Spleen (tissue), 13 donors: ENCODE measurements at regions of chr10 and their contacts with region 1.

Region 1: DNA sequence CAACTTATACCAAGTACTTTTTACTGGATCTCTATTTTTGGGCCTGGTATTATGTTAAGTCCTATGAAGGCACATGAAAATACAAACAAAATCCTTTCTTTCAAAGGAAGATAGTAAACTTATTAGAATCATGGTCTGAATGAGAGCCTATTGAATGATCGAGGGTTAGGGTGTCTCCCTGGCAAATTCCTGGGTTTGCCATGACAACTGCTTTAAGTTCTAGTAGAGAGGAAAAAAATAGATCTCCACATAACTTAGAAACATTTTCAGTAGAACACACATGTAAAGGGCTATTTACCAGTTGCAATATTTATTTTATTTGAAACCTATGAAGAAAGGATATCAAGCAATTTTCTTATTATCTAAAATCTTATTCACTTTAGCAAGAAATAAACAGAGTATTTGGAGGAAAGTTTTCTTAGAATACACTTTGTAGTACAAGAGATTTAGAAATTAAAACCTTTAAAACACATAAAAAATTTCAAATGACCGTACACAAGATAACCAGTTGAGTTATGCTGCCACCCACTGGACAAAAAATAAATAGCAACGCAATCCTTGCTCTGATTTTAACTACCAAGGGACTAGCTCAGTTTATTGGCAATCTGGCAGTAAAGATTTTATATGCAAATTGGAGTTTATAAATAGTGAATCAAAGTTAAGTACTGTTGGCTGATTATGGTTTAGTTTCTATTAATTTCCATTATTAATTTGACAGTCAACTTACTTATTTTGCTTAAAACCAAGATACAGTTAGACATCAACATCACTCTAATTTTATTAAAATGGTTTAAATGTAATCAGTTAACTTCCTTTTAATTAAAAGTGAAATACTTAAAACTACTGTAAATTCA is 33.9 kb downstream of the CACUL1 start:
- DNase-seq: no peak
- H3K4me3 ChIP-seq: no peak overlapping the region
- H3K27ac ChIP-seq: no peak overlapping the region
- H3K4me1 ChIP-seq: peaks cover 0 to 57% (median 7%) of the 10 kb centered on the region in 6 donors
- H3K27me3 ChIP-seq: no peaks in the 10 kb centered on the region
- CTCF ChIP-seq: peak; percentile 57 to 88 (median 81)
- POLR2A ChIP-seq: no peak

Region 2: GRCh38 chr10:118568327-118568848 is 152.5 kb before region 1 on chr10:
- intact Hi-C with region 1: loop called (anchors 5 kb)
- DNase-seq: no peak
- H3K4me3 ChIP-seq: no peak overlapping the region
- H3K27ac ChIP-seq: no peak overlapping the region
- H3K4me1 ChIP-seq: peaks cover 0 to 14% (median 3%) of the 10 kb centered on the region in 6 donors
- H3K27me3 ChIP-seq: peaks cover 0 to 4% (median 0%) of the 10 kb centered on the region in 7 donors
- CTCF ChIP-seq: peak; percentile 28 to 95 (median 68)
- POLR2A ChIP-seq: no peak